ENCODE measurements at regions of chr11 and their contacts with region 1.

Region 1: GRCh38 chr11:64246871-64247728 is at the start of gene PPP1R14B:
- DNase-seq: peak; percentile 72 to 93 (median 84)
- ATAC-seq: peak; percentile 78
- H3K4me3 ChIP-seq: peak within 1 kb of the TSS; percentile 98
- H3K27ac ChIP-seq: peak within 1 kb of the TSS; percentile 98
- H3K4me1 ChIP-seq: peaks cover 42 to 92% of the 10 kb centered on the region in 2 experiments
- H3K27me3 ChIP-seq: no peaks in the 10 kb centered on the region
- CTCF ChIP-seq: peak; percentile 15 to 29 (median 26); a peak in 3 of 6 replicates
- EP300 ChIP-seq: peak; percentile 24
- POLR2A ChIP-seq: peak; percentile 90
- RAD21 ChIP-seq: no peak
- polyA plus RNA-seq, gene PPP1R14B: 7.7 to 17.5 TPM

Region 2: DNA sequence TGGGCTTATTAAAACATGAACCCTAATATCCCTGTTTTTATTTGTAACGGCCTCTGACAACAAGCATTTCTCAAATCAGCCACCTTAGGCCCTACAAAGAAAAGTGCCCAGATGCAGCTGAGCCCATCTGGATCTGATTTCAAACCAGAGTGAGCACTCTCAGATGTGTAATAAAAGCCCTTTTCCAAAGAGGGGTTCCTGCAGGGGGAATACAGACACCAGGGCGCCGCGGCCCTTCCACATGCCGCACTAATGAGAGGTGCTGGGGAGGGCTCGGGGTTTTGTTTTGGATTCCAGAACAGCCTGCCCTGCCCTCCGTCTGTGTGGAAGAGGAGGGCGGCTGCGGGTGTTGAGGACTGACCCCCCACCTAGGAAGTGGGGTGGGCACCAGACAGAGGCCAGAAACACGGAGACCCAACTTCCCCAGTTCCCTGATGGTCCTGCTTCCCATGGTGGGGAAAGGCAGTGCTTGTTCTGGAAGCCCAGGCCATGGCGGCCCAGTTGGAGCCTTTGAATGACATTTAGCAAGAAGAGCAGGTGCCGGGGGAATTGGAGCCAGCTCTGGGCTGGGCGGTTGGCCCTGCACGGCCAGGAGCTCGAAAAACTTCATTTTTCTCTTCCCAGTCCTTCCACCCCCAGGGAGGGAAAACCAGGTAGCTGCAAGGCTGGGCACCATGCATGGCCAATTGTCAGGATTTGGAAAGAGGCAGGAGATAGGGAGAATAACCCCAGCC is 144.9 kb before region 1 on chr11:
- CTCF ChIA-PET with region 1: no interaction called
- POLR2A ChIA-PET with region 1: no interaction called
- in situ Hi-C with region 1: no loop called
- intact Hi-C with region 1: no loop called
- DNase-seq: no peak
- ATAC-seq: no peak
- H3K4me3 ChIP-seq: no peak overlapping the region
- H3K27ac ChIP-seq: no peak overlapping the region
- H3K4me1 ChIP-seq: peaks cover 0 to 14% of the 10 kb centered on the region in 2 experiments; a peak in 2 of 5 replicates
- H3K27me3 ChIP-seq: no peaks in the 10 kb centered on the region
- CTCF ChIP-seq: no peak
- EP300 ChIP-seq: no peak
- POLR2A ChIP-seq: no peak
- RAD21 ChIP-seq: no peak

Region 3: GRCh38 chr11:64233913-64234834 is 12.9 kb before region 1 on chr11 and contains the start of gene VEGFB:
- CTCF ChIA-PET with region 1: no interaction called
- POLR2A ChIA-PET with region 1: interaction called, 10 read pairs
- in situ Hi-C with region 1: no loop called
- intact Hi-C with region 1: no loop called
- DNase-seq: peak; percentile 84 to 87 (median 86)
- ATAC-seq: peak; percentile 67
- H3K4me3 ChIP-seq: peak within 1 kb of the TSS; percentile 71
- H3K27ac ChIP-seq: peak within 1 kb of the TSS; percentile 62; the same call in 2 of the 3 replicates
- H3K4me1 ChIP-seq: peaks cover 36 to 69% of the 10 kb centered on the region in 2 experiments
- H3K27me3 ChIP-seq: no peaks in the 10 kb centered on the region
- CTCF ChIP-seq: no peak
- EP300 ChIP-seq: no peak
- POLR2A ChIP-seq: peak; percentile 47; the same call in 1 of the 2 replicates
- RAD21 ChIP-seq: no peak
- polyA plus RNA-seq, gene VEGFB: 12.0 to 12.1 TPM

Measured in K562 (cell line).